HEK293 (cell line): ENCODE measurements at regions of chr1 and their contacts with region 1.

Region 1: GRCh38 chr1:213987927-213988506 is at the start of gene PROX1:
- H3K4me3 ChIP-seq: peak within 1 kb of the TSS; percentile 68
- H3K27ac ChIP-seq: peak within 1 kb of the TSS; percentile 90
- H3K4me1 ChIP-seq: peaks cover 42% of the 10 kb centered on the region
- CTCF ChIP-seq: peak; percentile 78

Region 2: DNA sequence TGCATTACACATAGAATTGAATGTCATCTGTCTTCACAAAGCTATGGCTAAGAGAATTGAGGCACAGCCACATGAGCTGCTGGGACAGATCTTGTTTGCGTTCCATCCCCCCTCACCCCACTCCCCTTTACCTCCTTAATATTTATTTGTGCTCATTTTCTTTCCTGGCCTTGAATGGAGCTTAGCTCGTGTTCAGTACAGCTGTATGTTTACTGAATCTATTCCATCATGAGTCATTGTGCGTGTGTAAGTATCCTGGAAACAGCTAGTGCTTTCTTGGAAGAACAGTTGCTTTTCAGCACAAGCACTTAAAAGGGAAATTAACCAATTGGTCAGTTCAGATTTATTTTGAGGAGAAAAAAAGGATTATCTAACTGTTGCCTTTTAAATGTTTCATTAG is 14.5 kb after region 1 on chr1:
- CTCF ChIA-PET with region 1: interaction called, 3 read pairs
- POLR2A ChIA-PET with region 1: interaction called, 18 read pairs
- H3K4me3 ChIP-seq: no peak overlapping the region
- H3K27ac ChIP-seq: no peak overlapping the region
- H3K4me1 ChIP-seq: peaks cover 18% of the 10 kb centered on the region; the same call in 1 of the 2 replicates
- CTCF ChIP-seq: no peak

Region 3: DNA sequence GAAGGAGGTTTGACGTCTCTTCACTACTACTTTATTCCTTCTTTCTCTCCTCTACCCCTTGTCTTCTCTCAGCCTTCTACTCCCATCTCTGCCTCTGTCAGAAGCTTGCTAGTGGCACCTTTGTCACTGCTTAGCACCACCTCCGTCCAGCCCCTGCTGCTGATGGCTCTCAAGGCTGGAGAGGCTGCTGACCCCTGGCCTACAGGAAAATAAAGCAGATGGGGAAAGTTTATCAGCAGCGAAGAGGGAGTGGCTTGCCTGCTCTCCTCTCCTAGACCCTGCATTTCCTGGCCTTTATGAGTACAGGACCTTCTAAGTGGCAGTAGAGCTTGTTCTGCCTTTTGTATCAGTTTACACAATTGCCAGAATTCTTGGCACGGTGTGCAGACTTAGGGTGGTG is 26.7 kb after region 1 on chr1:
- CTCF ChIA-PET with region 1: no interaction called
- POLR2A ChIA-PET with region 1: no interaction called
- H3K4me3 ChIP-seq: no peak overlapping the region
- H3K27ac ChIP-seq: no peak overlapping the region
- H3K4me1 ChIP-seq: peaks cover 5% of the 10 kb centered on the region; the same call in 1 of the 2 replicates
- CTCF ChIP-seq: no peak